HCT116 (cell line): ENCODE measurements at regions of chr12 and their contacts with region 1.

Region 1: GRCh38 chr12:54579696-54580333 is 8.6 kb downstream of the PPP1R1A start:
- DNase-seq: peak; percentile 55
- ATAC-seq: peak; percentile 99
- H3K4me3 ChIP-seq: no peak overlapping the region; a peak in 1 of 4 replicates
- H3K27ac ChIP-seq: no peak overlapping the region
- H3K4me1 ChIP-seq: peaks cover 0 to 10% of the 10 kb centered on the region in 2 experiments; a peak in 2 of 4 replicates
- H3K27me3 ChIP-seq: peaks cover 14% of the 10 kb centered on the region; the same call in 1 of the 2 replicates
- CTCF ChIP-seq: peak; percentile 72 to 100 (median 98)
- POLR2A ChIP-seq: no peak
- RAD21 ChIP-seq: peak; percentile 82

Region 2: GRCh38 chr12:54126696-54127537 is 452.9 kb before region 1 on chr12:
- CTCF ChIA-PET with region 1: no interaction called
- POLR2A ChIA-PET with region 1: no interaction called
- RAD21 ChIA-PET with region 1: no interaction called
- intact Hi-C with region 1: no loop called
- DNase-seq: no peak
- ATAC-seq: no peak
- H3K4me3 ChIP-seq: no peak overlapping the region
- H3K27ac ChIP-seq: no peak overlapping the region
- H3K4me1 ChIP-seq: no peaks in the 10 kb centered on the region
- H3K27me3 ChIP-seq: peaks cover 5% of the 10 kb centered on the region; the same call in 1 of the 2 replicates
- CTCF ChIP-seq: no peak
- POLR2A ChIP-seq: no peak
- RAD21 ChIP-seq: no peak

Region 3: GRCh38 chr12:54526812-54527630 is 52.8 kb before region 1 on chr12:
- CTCF ChIA-PET with region 1: interaction called, 18 read pairs
- POLR2A ChIA-PET with region 1: no interaction called
- RAD21 ChIA-PET with region 1: no interaction called
- intact Hi-C with region 1: no loop called
- DNase-seq: peak; percentile 53
- ATAC-seq: peak; percentile 97
- H3K4me3 ChIP-seq: no peak overlapping the region
- H3K27ac ChIP-seq: no peak overlapping the region
- H3K4me1 ChIP-seq: 0 out of 4 replicates have a peak, but pooled peaks cover 0 to 3% of the 10 kb centered on the region in 2 experiments
- H3K27me3 ChIP-seq: peaks cover 51% of the 10 kb centered on the region
- CTCF ChIP-seq: peak; percentile 58 to 96 (median 89); a peak in 5 of 6 replicates
- POLR2A ChIP-seq: no peak
- RAD21 ChIP-seq: peak; percentile 78

Region 4: DNA sequence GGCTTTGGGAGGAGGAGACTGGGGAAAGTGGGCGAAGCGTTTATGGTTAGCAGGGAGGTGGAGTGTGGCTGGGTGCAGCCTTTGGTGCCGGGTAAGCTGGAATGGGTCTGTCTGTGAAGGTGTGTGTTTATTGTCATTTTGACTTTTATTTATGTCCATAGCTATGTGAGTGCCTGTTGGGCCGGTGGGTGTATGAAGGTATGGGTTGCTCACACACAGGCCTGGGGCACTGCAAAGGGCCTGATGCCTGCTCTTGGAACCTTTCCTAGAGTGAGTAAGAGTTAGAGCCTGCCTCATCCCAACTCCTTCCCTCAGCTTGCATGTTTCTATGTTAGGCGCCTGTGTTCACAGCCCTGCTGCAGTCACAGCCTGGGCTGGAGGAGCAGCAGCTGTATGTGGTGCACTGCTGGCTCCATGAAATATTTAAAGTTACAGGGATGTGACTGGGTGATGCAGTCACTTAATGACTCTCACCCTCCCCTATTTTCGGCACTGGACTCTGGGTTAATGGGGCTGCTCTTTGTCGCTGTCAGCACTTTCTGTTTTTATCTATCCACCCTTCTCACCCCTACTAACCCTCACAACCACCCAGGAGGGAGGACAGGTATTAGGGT is 11.3 kb after region 1 on chr12:
- CTCF ChIA-PET with region 1: interaction called, 18 read pairs
- POLR2A ChIA-PET with region 1: no interaction called
- RAD21 ChIA-PET with region 1: no interaction called
- intact Hi-C with region 1: no loop called
- DNase-seq: no peak
- ATAC-seq: no peak
- H3K4me3 ChIP-seq: no peak overlapping the region
- H3K27ac ChIP-seq: no peak overlapping the region
- H3K4me1 ChIP-seq: peaks cover 0 to 5% of the 10 kb centered on the region in 2 experiments; a peak in 1 of 4 replicates
- H3K27me3 ChIP-seq: peaks cover 5% of the 10 kb centered on the region; the same call in 1 of the 2 replicates
- CTCF ChIP-seq: no peak
- POLR2A ChIP-seq: no peak
- RAD21 ChIP-seq: no peak

Region 5: GRCh38 chr12:54596526-54596946 is 16.7 kb after region 1 on chr12:
- CTCF ChIA-PET with region 1: interaction called, 18 read pairs
- POLR2A ChIA-PET with region 1: interaction called, 4 read pairs
- RAD21 ChIA-PET with region 1: no interaction called
- intact Hi-C with region 1: no loop called
- DNase-seq: peak; percentile 57
- ATAC-seq: peak; percentile 95
- H3K4me3 ChIP-seq: no peak overlapping the region
- H3K27ac ChIP-seq: no peak overlapping the region
- H3K4me1 ChIP-seq: no peaks in the 10 kb centered on the region
- H3K27me3 ChIP-seq: no peaks in the 10 kb centered on the region; the same call in 1 of the 2 replicates
- CTCF ChIP-seq: peak; percentile 69 to 91 (median 90)
- POLR2A ChIP-seq: no peak
- RAD21 ChIP-seq: peak; percentile 69

Region 6: DNA sequence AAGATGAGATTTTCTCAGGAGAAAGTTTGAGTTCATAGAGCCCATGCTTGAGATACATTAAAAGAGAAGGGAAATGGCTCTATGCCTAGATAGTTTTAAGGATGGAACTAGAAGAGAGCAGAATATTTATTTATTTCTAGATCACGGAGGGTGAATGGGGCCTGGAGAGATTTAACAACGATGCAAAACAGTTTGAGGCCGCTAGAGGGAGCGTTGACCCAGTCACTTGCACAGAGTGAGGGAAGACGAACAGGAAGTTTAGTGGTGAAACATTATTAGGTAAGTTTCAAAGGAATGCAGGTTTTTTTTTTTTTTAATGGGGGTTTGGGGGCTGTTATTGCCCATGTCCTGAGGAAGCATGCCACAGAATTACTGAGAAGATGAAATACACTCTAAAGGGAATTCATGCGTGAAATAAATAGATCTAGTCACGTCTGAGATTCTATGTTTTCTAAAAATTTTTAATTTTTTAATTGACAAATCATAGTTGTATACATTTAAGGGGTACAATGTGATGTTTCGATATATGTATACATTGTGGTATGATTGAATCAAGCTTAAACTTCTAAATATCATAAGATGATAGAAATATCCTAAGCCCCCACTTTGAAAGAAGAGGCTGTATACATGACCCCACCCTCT is 23.5 kb after region 1 on chr12:
- CTCF ChIA-PET with region 1: interaction called, 11 read pairs
- POLR2A ChIA-PET with region 1: interaction called, 4 read pairs
- RAD21 ChIA-PET with region 1: no interaction called
- intact Hi-C with region 1: no loop called
- DNase-seq: peak; percentile 71
- ATAC-seq: peak; percentile 96
- H3K4me3 ChIP-seq: no peak overlapping the region
- H3K27ac ChIP-seq: no peak overlapping the region
- H3K4me1 ChIP-seq: peaks cover 0 to 11% of the 10 kb centered on the region in 2 experiments; a peak in 3 of 4 replicates
- H3K27me3 ChIP-seq: peaks cover 4% of the 10 kb centered on the region; the same call in 1 of the 2 replicates
- CTCF ChIP-seq: peak; percentile 74 to 85 (median 84)
- POLR2A ChIP-seq: no peak
- RAD21 ChIP-seq: peak; percentile 65

Region 7: DNA sequence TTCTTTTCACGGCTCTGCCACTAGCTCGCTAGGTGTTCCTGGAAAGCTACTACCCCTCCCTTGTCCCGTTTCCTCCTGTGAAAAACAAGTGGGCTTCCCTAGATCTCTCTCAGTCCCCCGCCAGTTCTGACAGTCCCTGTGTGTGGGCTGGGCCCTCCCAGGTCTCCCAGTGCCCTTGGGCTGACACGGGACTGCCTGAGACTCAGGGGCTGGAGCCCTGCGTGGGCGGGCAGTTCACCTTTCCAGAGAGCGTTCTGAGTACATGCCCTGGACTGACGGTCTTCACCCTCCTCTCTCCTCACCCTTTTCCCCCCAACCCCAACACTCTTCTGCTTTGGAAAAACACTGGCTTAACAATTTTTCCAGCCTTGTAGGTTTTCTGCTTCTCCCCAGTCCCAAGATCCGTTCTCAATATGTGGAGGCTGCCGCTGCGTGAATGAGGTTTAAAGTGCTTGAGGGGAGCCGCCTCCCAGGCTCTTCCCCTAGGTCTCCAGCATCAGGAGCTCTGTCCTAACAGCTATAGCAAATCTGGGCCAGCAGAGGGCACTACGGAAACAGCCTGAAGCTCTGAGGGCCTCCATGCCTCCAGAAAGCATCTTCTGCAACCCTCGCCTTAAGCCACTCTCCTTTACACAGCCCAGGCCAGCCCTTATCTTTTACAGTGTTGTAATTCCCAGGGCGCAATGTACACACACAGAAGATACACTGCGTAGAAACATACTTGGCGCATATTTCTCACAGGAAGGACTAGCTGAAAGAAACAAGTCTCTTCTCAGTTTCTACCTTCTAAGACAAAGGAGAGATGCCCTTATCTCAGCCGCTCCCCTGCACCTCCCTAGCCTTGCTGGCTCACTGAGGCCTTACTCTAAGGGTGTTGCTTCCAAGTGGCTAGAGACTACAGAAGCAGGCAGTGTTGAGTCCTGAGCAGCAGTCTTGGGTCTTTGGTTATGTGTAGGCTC is 78.8 kb after region 1 on chr12:
- CTCF ChIA-PET with region 1: interaction called, 10 read pairs
- POLR2A ChIA-PET with region 1: no interaction called
- RAD21 ChIA-PET with region 1: no interaction called
- intact Hi-C with region 1: no loop called
- DNase-seq: peak; percentile 60
- ATAC-seq: peak; percentile 100
- H3K4me3 ChIP-seq: 0 out of 4 replicates have a peak overlapping the region, but pooled peaks of 1 of the 2 experiments have one; percentile 8
- H3K27ac ChIP-seq: no peak overlapping the region
- H3K4me1 ChIP-seq: peaks cover 0 to 8% of the 10 kb centered on the region in 2 experiments; a peak in 2 of 4 replicates
- H3K27me3 ChIP-seq: no peaks in the 10 kb centered on the region
- CTCF ChIP-seq: peak; percentile 44 to 88 (median 80); a peak in 5 of 6 replicates
- POLR2A ChIP-seq: no peak
- RAD21 ChIP-seq: peak; percentile 41; the same call in 1 of the 2 replicates